MCF 10A (cell line): ENCODE measurements at regions of chr7 and their contacts with region 1.

Region 1: GRCh38 chr7:99143853-99144672 is at the start of gene SMURF1:
- DNase-seq: peak; percentile 54
- H3K4me3 Mint-ChIP-seq: peak within 1 kb of the TSS; percentile 92
- H3K27ac Mint-ChIP-seq: peak within 1 kb of the TSS; percentile 76
- H3K4me1 Mint-ChIP-seq: peaks cover 28% of the 10 kb centered on the region
- H3K27me3 Mint-ChIP-seq: no peaks in the 10 kb centered on the region
- CTCF ChIP-seq: no peak
- total RNA-seq, gene SMURF1: 19.9 and 20.3 TPM in 2 replicates

Region 2: GRCh38 chr7:98584830-98585229 is 559.2 kb before region 1 on chr7:
- CTCF ChIA-PET with region 1: no interaction called
- POLR2A ChIA-PET with region 1: no interaction called
- intact Hi-C with region 1: no loop called
- DNase-seq: no peak
- H3K4me3 Mint-ChIP-seq: no peak overlapping the region
- H3K27ac Mint-ChIP-seq: no peak overlapping the region
- H3K4me1 Mint-ChIP-seq: no peaks in the 10 kb centered on the region
- H3K27me3 Mint-ChIP-seq: peaks cover 62% of the 10 kb centered on the region
- CTCF ChIP-seq: no peak

Region 3: DNA sequence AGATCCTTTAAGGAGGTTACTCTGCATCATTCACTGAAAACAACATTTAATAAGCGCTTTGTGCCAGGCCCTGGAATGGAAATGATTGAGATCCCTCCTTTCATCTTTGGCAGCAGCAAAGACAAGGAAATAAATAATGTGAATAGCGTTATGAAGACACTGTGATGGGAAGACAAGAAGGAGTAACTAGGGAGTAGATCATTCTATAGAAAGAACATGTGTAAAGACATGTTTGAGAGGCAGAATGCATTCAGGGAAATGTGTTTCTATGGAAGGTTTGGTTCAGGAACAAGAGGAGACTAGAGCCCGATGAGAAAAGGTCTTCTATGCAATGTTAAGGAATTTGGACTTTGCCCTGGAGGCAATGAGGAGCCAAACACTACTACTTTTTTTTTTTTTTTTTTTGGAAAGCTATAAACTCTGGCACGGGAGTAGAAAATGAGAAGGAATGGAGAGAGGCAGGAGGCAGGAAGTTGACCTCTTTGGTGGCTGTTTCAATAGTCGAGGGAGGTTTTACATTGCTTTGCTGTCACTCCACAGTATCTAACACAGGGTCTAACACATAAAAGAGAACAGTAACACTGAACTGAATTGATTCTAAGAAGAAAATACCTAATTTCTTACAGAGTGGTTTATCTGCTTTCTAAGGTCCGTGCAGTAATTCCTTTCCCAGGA is 45.1 kb before region 1 on chr7:
- CTCF ChIA-PET with region 1: no interaction called
- POLR2A ChIA-PET with region 1: interaction called, 16 read pairs
- intact Hi-C with region 1: loop called (anchors 2 kb)
- DNase-seq: peak; percentile 78
- H3K4me3 Mint-ChIP-seq: peak overlapping the region; percentile 22
- H3K27ac Mint-ChIP-seq: peak overlapping the region; percentile 33
- H3K4me1 Mint-ChIP-seq: peaks cover 41% of the 10 kb centered on the region
- H3K27me3 Mint-ChIP-seq: no peaks in the 10 kb centered on the region
- CTCF ChIP-seq: no peak

Region 4: DNA sequence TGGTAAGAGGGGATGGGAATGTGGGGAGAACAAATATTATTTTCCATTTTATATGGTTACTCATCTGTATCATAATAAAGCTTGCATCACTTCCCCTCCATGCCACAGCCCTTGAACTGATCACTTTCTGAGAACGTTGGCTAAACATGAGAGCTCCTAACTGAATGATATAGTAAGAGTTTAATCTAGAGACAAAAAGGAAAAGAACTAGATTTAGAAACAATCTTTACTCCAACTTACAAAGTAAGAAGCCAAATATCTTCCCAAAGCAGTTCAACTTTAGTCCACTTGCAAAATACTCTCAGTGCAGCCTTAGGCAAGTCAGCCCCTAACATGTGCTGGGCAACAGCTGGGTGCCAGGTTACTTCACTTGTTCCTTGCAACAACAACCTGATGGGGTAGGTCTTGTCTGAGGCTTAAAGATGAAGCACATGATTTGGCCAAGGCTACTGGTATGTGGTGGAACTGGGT is 20.5 kb before region 1 on chr7:
- CTCF ChIA-PET with region 1: no interaction called
- POLR2A ChIA-PET with region 1: interaction called, 22 read pairs
- intact Hi-C with region 1: no loop called
- DNase-seq: peak; percentile 68
- H3K4me3 Mint-ChIP-seq: no peak overlapping the region
- H3K27ac Mint-ChIP-seq: peak overlapping the region; percentile 61
- H3K4me1 Mint-ChIP-seq: peaks cover 41% of the 10 kb centered on the region
- H3K27me3 Mint-ChIP-seq: no peaks in the 10 kb centered on the region
- CTCF ChIP-seq: no peak

Region 5: DNA sequence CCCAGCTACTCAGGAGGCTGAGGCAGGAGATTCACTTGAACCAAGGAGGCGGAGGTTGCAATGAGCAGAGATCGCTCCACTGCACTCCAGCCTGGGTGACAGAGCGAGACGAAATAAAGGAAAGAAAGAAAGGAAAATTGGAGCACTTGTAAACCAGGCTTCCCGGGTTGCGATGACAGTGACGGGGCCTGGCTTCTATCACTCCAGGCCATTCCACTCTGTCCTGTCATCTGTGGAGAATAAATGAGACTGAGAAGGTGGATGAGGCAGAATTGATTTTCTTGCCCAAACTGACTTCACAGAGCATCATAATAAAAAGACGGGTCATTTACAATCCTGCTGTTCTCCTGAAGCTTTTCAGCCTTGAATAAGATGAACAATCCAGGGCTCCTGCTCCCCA is 75.9 kb after region 1 on chr7:
- CTCF ChIA-PET with region 1: no interaction called
- POLR2A ChIA-PET with region 1: interaction called, 4 read pairs
- intact Hi-C with region 1: loop called (anchors 5 kb)
- DNase-seq: no peak
- H3K4me3 Mint-ChIP-seq: no peak overlapping the region
- H3K27ac Mint-ChIP-seq: no peak overlapping the region
- H3K4me1 Mint-ChIP-seq: peaks cover 16% of the 10 kb centered on the region
- H3K27me3 Mint-ChIP-seq: no peaks in the 10 kb centered on the region
- CTCF ChIP-seq: no peak